ENCODE measurements at regions of chr6 and their contacts with region 1.

Region 1: GRCh38 chr6:132020138-132020581 is 69.0 kb upstream of the CCN2 start:
- DNase-seq: no peak
- ATAC-seq: no peak; the same call in 2 of the 3 replicates
- H3K4me3 ChIP-seq: no peak overlapping the region
- H3K27ac ChIP-seq: peak overlapping the region; percentile 25
- H3K4me1 ChIP-seq: peaks cover 44% of the 10 kb centered on the region
- H3K27me3 ChIP-seq: no peaks in the 10 kb centered on the region
- CTCF ChIP-seq: no peak
- EP300 ChIP-seq: no peak
- POLR2A ChIP-seq: no peak
- RAD21 ChIP-seq: no peak

Region 2: GRCh38 chr6:131851049-131851769 is 169.0 kb before region 1 on chr6:
- CTCF ChIA-PET with region 1: no interaction called
- POLR2A ChIA-PET with region 1: no interaction called
- in situ Hi-C with region 1: no loop called
- intact Hi-C with region 1: no loop called
- DNase-seq: no peak
- ATAC-seq: peak; percentile 31; the same call in 1 of the 3 replicates
- H3K4me3 ChIP-seq: no peak overlapping the region
- H3K27ac ChIP-seq: no peak overlapping the region
- H3K4me1 ChIP-seq: peaks cover 55% of the 10 kb centered on the region
- H3K27me3 ChIP-seq: no peaks in the 10 kb centered on the region; a peak in 1 of 5 replicates
- CTCF ChIP-seq: no peak
- EP300 ChIP-seq: no peak
- POLR2A ChIP-seq: no peak
- RAD21 ChIP-seq: no peak

Region 3: GRCh38 chr6:131937703-131938631 is 82.2 kb before region 1 on chr6:
- CTCF ChIA-PET with region 1: no interaction called
- POLR2A ChIA-PET with region 1: no interaction called
- in situ Hi-C with region 1: no loop called
- intact Hi-C with region 1: loop called (anchors 5 kb)
- DNase-seq: peak; percentile 100
- ATAC-seq: peak; percentile 98
- H3K4me3 ChIP-seq: peak overlapping the region in 1 of 3 experiments; percentile 7; a peak in 1 of 6 replicates
- H3K27ac ChIP-seq: peak overlapping the region; percentile 56
- H3K4me1 ChIP-seq: peaks cover 46% of the 10 kb centered on the region
- H3K27me3 ChIP-seq: no peaks in the 10 kb centered on the region
- CTCF ChIP-seq: no peak
- EP300 ChIP-seq: peak; percentile 40 to 97; a peak in 3 of 4 replicates
- POLR2A ChIP-seq: no peak
- RAD21 ChIP-seq: no peak

Measured in HepG2 (cell line).